ENCODE measurements at regions of chr19 and their contacts with region 1.

Region 1: DNA sequence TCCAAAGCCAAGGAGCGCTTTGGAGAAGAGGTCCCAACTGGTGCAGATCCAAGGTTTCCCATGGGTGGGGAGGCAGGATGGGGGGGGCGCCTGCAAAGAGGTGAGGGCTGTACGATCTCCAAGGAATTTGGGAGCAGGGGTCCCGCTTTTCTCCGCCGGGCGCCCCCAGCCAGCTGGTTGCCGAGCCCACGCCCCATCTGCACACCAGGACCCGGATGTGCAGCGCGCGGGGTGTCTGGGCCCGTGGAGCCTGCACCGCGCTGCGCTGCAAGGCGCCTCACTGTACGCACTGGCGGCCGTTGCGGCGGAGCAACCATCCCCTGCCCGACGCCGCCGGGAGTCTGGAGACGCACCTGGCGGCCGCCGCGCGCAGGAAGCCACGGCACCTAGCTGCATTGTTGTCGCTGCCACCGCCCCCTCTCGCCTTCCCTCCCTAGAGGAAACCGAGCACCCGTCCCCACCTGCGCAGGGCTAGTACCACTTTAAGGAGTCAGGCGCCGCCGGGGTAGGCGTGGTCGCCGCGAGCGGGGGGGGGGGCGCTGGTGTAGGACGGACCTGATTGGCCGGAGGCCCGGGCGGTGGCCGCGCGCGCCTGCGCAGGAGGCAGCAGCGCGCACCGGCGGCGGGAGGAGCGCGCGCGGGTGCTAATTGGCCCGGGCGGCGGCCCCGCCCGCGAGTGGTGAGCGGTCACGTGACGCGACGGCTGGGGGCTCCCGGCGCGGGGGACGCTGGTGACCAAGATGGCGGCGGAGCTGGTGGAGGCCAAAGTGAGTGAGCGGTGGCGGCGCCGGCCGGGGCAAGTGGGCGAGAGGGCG is at the start of gene PIAS4:
- DNase-seq: peak; percentile 94
- H3K4me3 Mint-ChIP-seq: peak within 1 kb of the TSS; percentile 90
- H3K27ac Mint-ChIP-seq: peak within 1 kb of the TSS; percentile 84
- H3K4me1 Mint-ChIP-seq: peaks cover 18% of the 10 kb centered on the region
- H3K27me3 Mint-ChIP-seq: no peaks in the 10 kb centered on the region
- total RNA-seq, gene PIAS4: 37.6 and 41.0 TPM in 2 replicates

Region 2: GRCh38 chr19:3970808-3971598 is 36.2 kb before region 1 on chr19 and contains the start of gene DAPK3:
- intact Hi-C with region 1: loop called (anchors 1 kb)
- DNase-seq: peak; percentile 93
- H3K4me3 Mint-ChIP-seq: peak within 1 kb of the TSS; percentile 91
- H3K27ac Mint-ChIP-seq: peak within 1 kb of the TSS; percentile 82
- H3K4me1 Mint-ChIP-seq: peaks cover 25% of the 10 kb centered on the region
- H3K27me3 Mint-ChIP-seq: no peaks in the 10 kb centered on the region
- total RNA-seq, gene DAPK3: 47.2 and 47.3 TPM in 2 replicates